ENCODE measurements at regions of chr12 and their contacts with region 1.

Region 1: GRCh38 chr12:102990419-102990818 is 32.9 kb downstream of the ASCL1 start:
- DNase-seq: no peak
- H3K4me3 ChIP-seq: no peak overlapping the region
- H3K27ac ChIP-seq: no peak overlapping the region
- H3K4me1 ChIP-seq: no peaks in the 10 kb centered on the region
- H3K27me3 ChIP-seq: no peaks in the 10 kb centered on the region
- CTCF ChIP-seq: no peak

Region 2: DNA sequence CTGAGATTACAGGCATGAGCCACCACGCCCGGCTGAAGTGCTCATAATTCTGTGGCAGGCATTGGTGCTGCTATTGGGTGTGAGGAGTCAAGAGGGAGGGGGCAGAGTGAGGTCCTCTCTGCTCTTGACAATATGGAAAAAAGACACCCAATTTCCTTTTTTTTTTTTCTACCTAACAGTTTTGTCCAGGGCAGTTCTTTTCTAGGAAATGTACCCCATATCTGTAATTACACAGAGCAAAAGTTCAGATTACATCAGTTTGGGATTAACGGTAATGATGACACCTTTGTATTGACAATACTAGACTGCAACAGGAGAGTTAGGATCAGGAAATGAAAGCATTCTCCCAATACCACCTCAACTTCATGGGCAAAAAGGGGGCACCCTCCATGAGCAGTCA is 546.3 kb before region 1 on chr12:
- CTCF ChIA-PET with region 1: no interaction called
- dilution Hi-C with region 1: no loop called
- in situ Hi-C with region 1: no loop called
- intact Hi-C with region 1: no loop called
- DNase-seq: no peak
- H3K4me3 ChIP-seq: no peak overlapping the region
- H3K27ac ChIP-seq: no peak overlapping the region
- H3K4me1 ChIP-seq: no peaks in the 10 kb centered on the region
- H3K27me3 ChIP-seq: no peaks in the 10 kb centered on the region
- CTCF ChIP-seq: no peak

Region 3: GRCh38 chr12:103077108-103077773 is 86.8 kb after region 1 on chr12:
- CTCF ChIA-PET with region 1: no interaction called
- dilution Hi-C with region 1: loop called (anchors 5 kb)
- in situ Hi-C with region 1: no loop called
- intact Hi-C with region 1: no loop called
- DNase-seq: no peak
- H3K4me3 ChIP-seq: no peak overlapping the region
- H3K27ac ChIP-seq: no peak overlapping the region
- H3K4me1 ChIP-seq: no peaks in the 10 kb centered on the region
- H3K27me3 ChIP-seq: no peaks in the 10 kb centered on the region
- CTCF ChIP-seq: no peak

Measured in mammary epithelial cell (primary cell).